ENCODE measurements at regions of chr2 and their contacts with region 1.

Region 1: DNA sequence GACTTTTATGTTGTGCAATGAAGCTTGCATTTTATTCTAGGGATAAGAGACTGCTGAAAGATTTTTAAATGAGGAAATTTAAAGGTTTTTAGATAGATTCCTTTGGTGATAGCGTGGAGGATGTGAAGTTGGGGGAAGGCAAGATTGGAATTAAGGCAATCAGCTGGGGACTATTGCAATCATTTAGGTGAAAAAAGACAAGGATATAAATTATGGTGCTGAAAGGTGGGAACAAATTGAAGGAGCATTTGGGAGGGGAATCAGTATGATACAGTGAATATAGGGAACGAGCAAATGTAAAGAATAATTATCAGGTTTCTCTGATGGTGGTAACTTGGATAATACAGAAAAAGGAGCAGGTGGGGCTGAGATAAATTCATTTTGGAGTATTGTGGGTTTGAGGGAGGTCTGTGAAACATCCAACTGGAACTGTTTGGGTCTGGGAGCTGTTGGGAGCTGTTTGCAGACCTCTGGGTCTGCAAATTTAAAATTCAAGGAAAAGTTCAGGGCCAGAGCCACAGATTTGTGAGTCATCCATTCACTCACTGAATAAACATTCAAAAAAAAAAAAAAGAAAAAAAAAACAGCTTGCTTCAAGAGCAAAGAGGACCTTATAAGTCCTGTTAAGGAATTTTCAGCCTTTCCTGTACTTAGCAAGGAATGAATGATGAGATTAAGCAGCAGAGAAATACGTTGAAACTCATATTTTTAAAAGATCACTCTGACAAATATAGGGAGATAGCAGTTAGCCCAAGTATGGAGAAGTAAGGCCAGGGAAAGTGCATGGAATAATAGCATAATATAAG is 257.5 kb upstream of the FN1 start:
- DNase-seq: peak; percentile 89
- ATAC-seq: peak; percentile 74
- H3K4me3 ChIP-seq: no peak overlapping the region
- H3K27ac ChIP-seq: peak overlapping the region; percentile 76
- H3K4me1 ChIP-seq: peaks cover 14% of the 10 kb centered on the region
- H3K27me3 ChIP-seq: no peaks in the 10 kb centered on the region
- CTCF ChIP-seq: no peak
- POLR2A ChIP-seq: no peak
- RAD21 ChIP-seq: no peak

Region 2: GRCh38 chr2:215430528-215431187 is 262.7 kb before region 1 on chr2:
- CTCF ChIA-PET with region 1: no interaction called
- POLR2A ChIA-PET with region 1: no interaction called
- dilution Hi-C with region 1: no loop called
- in situ Hi-C with region 1: no loop called
- intact Hi-C with region 1: loop called (anchors 1 kb)
- DNase-seq: peak; percentile 71
- ATAC-seq: peak; percentile 33
- H3K4me3 ChIP-seq: no peak overlapping the region; the same call in 1 of the 2 replicates
- H3K27ac ChIP-seq: peak overlapping the region; percentile 73
- H3K4me1 ChIP-seq: peaks cover 8% of the 10 kb centered on the region
- H3K27me3 ChIP-seq: no peaks in the 10 kb centered on the region
- CTCF ChIP-seq: no peak
- POLR2A ChIP-seq: peak; percentile 41; the same call in 1 of the 2 replicates
- RAD21 ChIP-seq: no peak

Region 3: GRCh38 chr2:215528555-215528954 is 164.8 kb before region 1 on chr2:
- CTCF ChIA-PET with region 1: no interaction called
- POLR2A ChIA-PET with region 1: interaction called, 6 read pairs
- dilution Hi-C with region 1: no loop called
- in situ Hi-C with region 1: no loop called
- intact Hi-C with region 1: loop called (anchors 2 kb)
- DNase-seq: peak; percentile 99
- ATAC-seq: peak; percentile 70
- H3K4me3 ChIP-seq: no peak overlapping the region
- H3K27ac ChIP-seq: peak overlapping the region; percentile 94; the same call in 1 of the 2 replicates
- H3K4me1 ChIP-seq: peaks cover 17% of the 10 kb centered on the region
- H3K27me3 ChIP-seq: no peaks in the 10 kb centered on the region
- CTCF ChIP-seq: no peak
- POLR2A ChIP-seq: no peak
- RAD21 ChIP-seq: peak; percentile 50

Region 4: DNA sequence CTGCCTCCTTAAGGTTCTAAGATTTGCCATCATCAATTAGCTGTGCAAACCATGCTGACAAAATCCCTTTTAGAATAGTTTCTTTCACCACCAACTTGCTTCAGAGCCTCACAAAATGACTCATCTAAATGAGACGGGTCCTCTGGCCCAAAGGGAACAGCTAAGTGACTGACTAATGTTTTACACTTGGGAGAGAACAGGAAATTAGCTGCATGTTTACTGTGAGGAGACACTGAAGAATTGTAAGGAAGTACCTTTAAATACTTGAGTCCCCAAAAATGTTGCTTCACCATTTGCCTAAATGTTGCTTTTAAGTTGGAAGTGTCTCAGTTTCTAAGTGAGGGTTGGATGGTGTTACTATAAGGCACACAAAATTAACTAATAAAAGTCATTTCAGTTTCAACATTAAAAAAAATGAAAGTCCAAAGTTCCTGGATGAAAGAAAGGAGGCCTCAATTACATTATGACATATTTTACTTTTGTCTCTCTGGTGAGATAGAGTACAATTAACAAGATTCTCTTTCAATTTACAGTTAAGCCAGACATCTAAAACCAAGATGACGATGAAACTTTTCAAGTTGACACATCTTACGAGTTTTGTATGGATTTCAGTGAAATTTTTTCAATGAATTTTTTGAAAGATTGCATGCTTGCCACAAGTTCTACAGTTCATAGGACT is 28.4 kb before region 1 on chr2:
- CTCF ChIA-PET with region 1: interaction called, 4 read pairs
- POLR2A ChIA-PET with region 1: interaction called, 4 read pairs
- dilution Hi-C with region 1: no loop called
- in situ Hi-C with region 1: no loop called
- intact Hi-C with region 1: loop called (anchors 2 kb)
- DNase-seq: peak; percentile 93
- ATAC-seq: peak; percentile 63
- H3K4me3 ChIP-seq: no peak overlapping the region
- H3K27ac ChIP-seq: 0 out of 2 replicates have a peak overlapping the region, but pooled peaks have one; percentile 3
- H3K4me1 ChIP-seq: peaks cover 10% of the 10 kb centered on the region
- H3K27me3 ChIP-seq: no peaks in the 10 kb centered on the region
- CTCF ChIP-seq: no peak
- POLR2A ChIP-seq: no peak
- RAD21 ChIP-seq: peak; percentile 31; the same call in 1 of the 2 replicates

Region 5: DNA sequence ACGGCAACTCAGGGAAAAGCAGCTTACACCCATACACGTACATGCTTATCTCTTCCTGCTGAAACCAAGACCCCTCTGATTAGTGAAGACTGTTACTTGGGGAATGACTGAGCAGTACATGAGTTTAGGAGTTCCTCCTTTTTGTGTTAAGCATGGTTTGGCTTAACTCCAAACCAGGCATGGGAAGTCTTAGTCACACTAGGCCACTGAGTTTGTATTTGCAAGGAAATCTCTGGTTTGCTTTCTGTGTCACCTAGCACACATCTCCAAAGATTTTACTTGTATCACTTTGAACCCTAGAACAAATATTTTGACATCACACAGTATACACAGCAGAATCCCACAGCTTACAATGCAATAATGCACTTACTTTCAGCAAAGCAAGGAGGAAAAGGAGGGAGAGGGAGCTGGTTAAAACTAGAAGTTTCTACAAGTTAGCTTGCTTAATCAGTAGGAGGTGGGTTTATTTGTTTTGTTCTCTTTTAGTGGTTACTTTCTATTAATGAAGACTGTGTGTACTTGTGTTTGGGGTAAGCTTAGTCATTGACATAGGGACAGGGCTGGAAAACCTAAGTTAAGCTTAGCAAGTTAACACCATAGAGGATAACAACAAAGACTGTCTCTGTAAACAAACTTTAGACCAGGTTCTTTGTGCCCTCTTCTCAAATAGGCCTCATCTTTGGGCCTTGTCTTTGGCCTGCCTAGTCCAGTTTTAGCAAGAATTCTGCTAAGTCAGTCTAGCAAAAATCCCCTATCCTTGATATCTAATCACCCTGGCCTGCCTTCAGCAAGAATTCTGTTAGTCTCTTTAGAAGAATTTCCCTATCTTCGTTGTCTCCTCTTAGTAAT is 100.6 kb after region 1 on chr2:
- CTCF ChIA-PET with region 1: no interaction called
- POLR2A ChIA-PET with region 1: interaction called, 12 read pairs
- dilution Hi-C with region 1: no loop called
- in situ Hi-C with region 1: no loop called
- intact Hi-C with region 1: no loop called
- DNase-seq: peak; percentile 98
- ATAC-seq: peak; percentile 84
- H3K4me3 ChIP-seq: no peak overlapping the region
- H3K27ac ChIP-seq: peak overlapping the region; percentile 48; the same call in 1 of the 2 replicates
- H3K4me1 ChIP-seq: peaks cover 11% of the 10 kb centered on the region
- H3K27me3 ChIP-seq: no peaks in the 10 kb centered on the region
- CTCF ChIP-seq: no peak
- POLR2A ChIP-seq: no peak
- RAD21 ChIP-seq: no peak